ENCODE measurements at regions of chr16 and their contacts with region 1.

Region 1: DNA sequence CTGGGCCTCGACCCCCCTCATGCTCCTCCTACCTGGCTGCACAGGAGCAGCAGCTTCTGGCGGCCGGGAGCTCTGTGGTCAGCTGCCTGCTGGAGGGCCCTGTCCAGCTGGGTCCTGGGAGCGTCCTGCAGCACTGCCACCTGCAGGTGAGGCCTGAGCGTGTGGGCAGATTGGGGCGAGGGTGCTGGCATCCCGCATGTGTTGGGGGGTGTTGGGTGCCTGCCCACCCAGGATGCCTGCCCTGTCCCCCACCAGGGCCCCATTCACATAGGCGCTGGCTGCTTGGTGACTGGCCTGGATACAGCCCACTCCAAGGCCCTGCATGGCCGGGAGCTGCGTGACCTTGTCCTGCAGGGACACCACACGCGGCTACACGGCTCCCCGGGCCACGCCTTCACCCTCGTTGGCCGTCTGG is 16.5 kb downstream of the FCSK start:
- DNase-seq: no peak
- H3K4me3 Mint-ChIP-seq: no peak overlapping the region
- H3K27ac Mint-ChIP-seq: no peak overlapping the region
- H3K4me1 Mint-ChIP-seq: no peaks in the 10 kb centered on the region
- H3K27me3 Mint-ChIP-seq: no peaks in the 10 kb centered on the region

Region 2: GRCh38 chr16:70402916-70403659 is 67.8 kb before region 1 on chr16:
- CTCF ChIA-PET with region 1: no interaction called
- intact Hi-C with region 1: loop called (anchors 1 kb)
- DNase-seq: no peak
- H3K4me3 Mint-ChIP-seq: no peak overlapping the region
- H3K27ac Mint-ChIP-seq: peak overlapping the region; percentile 25
- H3K4me1 Mint-ChIP-seq: peaks cover 46% of the 10 kb centered on the region
- H3K27me3 Mint-ChIP-seq: no peaks in the 10 kb centered on the region

Measured in activated naive CD4-positive, alpha-beta T cell treated with anti-CD3 and anti-CD28 coated beads for 36 hours (primary cell).